Mucosa of descending colon (tissue), 3 donors: ENCODE measurements at regions of chr11 and their contacts with region 1.

Region 1: GRCh38 chr11:57456960-57457642 is 3.2 kb upstream of the RTN4RL2 start:
- DNase-seq: peak; percentile 87 to 92 (median 90)
- ATAC-seq: peak; percentile 82
- H3K4me3 ChIP-seq: no peak overlapping the region
- H3K4me1 ChIP-seq: peaks cover 31% of the 10 kb centered on the region
- CTCF ChIP-seq: peak; percentile 99

Region 2: GRCh38 chr11:57527056-57527631 is 70.0 kb after region 1 on chr11:
- intact Hi-C with region 1: loop called in 1 of 2 experiments (anchors 5 kb)
- DNase-seq: peak in 2 of 3 donors; percentile 76 to 93
- ATAC-seq: peak; percentile 24
- H3K4me3 ChIP-seq: no peak overlapping the region
- H3K4me1 ChIP-seq: peaks cover 13% of the 10 kb centered on the region
- CTCF ChIP-seq: peak; percentile 83

Region 3: DNA sequence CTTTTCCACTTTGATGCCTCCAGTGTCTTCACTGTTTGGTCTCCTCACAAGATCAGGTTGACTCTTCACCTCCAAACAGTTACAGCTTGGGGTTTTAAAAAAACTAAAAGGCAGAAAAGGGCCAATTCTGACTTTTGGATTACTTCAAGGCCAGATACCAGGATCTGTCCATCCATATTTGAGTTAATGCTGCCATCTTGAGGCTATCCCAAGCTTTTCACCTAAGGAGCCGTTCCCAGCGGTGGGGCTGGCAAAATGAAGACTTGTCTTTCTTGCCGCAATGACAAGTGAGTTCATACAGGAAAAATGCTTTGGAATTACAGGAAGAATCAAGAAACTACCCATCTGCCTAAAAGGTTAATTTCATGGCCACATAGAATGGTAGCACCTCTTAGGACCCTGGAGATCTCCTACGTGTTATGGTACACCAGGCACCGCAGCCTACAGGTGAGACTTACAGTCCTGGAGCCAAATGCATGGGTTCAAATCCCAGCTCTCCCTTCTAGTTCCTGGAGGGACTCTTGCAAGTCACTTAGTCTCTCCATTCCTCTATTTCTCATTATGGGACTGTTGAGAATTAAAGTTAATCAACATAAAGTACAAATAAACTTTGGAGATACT is 1056.8 kb after region 1 on chr11:
- intact Hi-C with region 1: loop called in 1 of 2 experiments (anchors 10 kb)
- DNase-seq: peak in 2 of 3 donors; percentile 36 to 46
- ATAC-seq: peak; percentile 79
- H3K4me3 ChIP-seq: no peak overlapping the region
- H3K4me1 ChIP-seq: no peaks in the 10 kb centered on the region
- CTCF ChIP-seq: peak; percentile 11